ENCODE measurements at regions of chr2 and their contacts with region 1.

Region 1: DNA sequence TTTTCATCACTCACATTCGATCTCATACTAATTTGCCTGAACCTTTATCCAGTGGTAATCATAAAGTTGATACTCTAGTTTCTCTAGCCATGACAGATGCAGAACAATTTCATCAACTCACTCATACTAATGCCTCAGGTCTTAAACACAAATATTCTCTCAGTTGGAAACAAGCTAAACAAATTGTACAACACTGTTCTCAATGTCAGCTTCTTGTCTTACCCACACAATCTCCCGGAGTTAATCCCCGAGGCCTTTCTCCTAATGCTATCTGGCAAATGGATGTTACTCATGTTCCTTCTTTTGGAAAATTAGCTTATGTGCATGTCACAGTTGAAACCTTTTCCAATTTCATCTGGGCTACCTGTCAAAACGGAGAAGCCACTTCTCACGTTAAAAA is 11.5 kb upstream of the CNOT11 start:
- DNase-seq: no peak
- ATAC-seq: no peak
- H3K4me3 Mint-ChIP-seq: no peak overlapping the region
- H3K27ac Mint-ChIP-seq: no peak overlapping the region
- H3K4me1 Mint-ChIP-seq: peaks cover 18% of the 10 kb centered on the region
- H3K27me3 Mint-ChIP-seq: no peaks in the 10 kb centered on the region
- CTCF ChIP-seq: no peak

Region 2: GRCh38 chr2:101223814-101224231 is 17.3 kb before region 1 on chr2:
- CTCF ChIA-PET with region 1: interaction called, 15 read pairs
- POLR2A ChIA-PET with region 1: no interaction called
- DNase-seq: no peak
- ATAC-seq: no peak
- H3K4me3 Mint-ChIP-seq: no peak overlapping the region
- H3K27ac Mint-ChIP-seq: no peak overlapping the region
- H3K4me1 Mint-ChIP-seq: no peaks in the 10 kb centered on the region
- H3K27me3 Mint-ChIP-seq: no peaks in the 10 kb centered on the region; the same call in 1 of the 2 replicates
- CTCF ChIP-seq: no peak

Region 3: GRCh38 chr2:101252408-101253012 is 11.4 kb after region 1 on chr2 and contains the start of gene CNOT11:
- CTCF ChIA-PET with region 1: interaction called, 14 read pairs
- POLR2A ChIA-PET with region 1: interaction called, 3 read pairs
- DNase-seq: peak; percentile 99
- ATAC-seq: peak; percentile 84
- H3K4me3 Mint-ChIP-seq: peak within 1 kb of the TSS; percentile 99
- H3K27ac Mint-ChIP-seq: peak within 1 kb of the TSS; percentile 96
- H3K4me1 Mint-ChIP-seq: peaks cover 54% of the 10 kb centered on the region
- H3K27me3 Mint-ChIP-seq: no peaks in the 10 kb centered on the region
- CTCF ChIP-seq: no peak
- total RNA-seq, gene CNOT11: 47.4 to 54.0 TPM (median 48.9 TPM) in 3 replicates